Heart left ventricle (tissue), 16 donors: ENCODE measurements at regions of chr11 and their contacts with region 1.

Region 1: DNA sequence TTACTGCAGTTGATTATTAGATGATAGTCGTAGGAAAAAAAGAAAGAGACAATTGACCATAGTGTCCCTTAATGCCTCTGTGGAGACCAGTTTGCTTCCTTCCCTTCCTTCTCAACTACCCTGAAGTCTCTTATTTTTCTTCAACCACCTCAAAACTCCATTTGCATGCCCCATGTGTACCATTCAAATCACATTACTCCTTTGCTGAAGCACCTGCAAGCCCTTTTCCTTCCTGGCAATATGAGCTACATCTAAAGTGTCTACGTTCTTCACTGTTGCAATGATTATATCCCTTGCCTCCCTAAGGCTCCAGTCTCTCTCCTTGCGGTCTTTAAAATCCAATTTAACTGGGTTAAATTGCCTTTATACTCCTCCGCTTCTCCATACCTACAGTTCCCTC is 867.4 kb upstream of the API5 start:
- DNase-seq: no peak
- ATAC-seq: no peak
- H3K4me3 ChIP-seq: no peak overlapping the region
- H3K27ac ChIP-seq: no peak overlapping the region
- H3K4me1 ChIP-seq: no peaks in the 10 kb centered on the region
- H3K27me3 ChIP-seq: no peaks in the 10 kb centered on the region
- CTCF ChIP-seq: no peak
- POLR2A ChIP-seq: no peak

Region 2: GRCh38 chr11:42299780-42300179 is 144.6 kb before region 1 on chr11:
- intact Hi-C with region 1: no loop called
- DNase-seq: no peak
- ATAC-seq: no peak
- H3K4me3 ChIP-seq: no peak overlapping the region
- H3K27ac ChIP-seq: no peak overlapping the region
- H3K4me1 ChIP-seq: no peaks in the 10 kb centered on the region
- H3K27me3 ChIP-seq: no peaks in the 10 kb centered on the region
- CTCF ChIP-seq: no peak
- POLR2A ChIP-seq: no peak

Region 3: DNA sequence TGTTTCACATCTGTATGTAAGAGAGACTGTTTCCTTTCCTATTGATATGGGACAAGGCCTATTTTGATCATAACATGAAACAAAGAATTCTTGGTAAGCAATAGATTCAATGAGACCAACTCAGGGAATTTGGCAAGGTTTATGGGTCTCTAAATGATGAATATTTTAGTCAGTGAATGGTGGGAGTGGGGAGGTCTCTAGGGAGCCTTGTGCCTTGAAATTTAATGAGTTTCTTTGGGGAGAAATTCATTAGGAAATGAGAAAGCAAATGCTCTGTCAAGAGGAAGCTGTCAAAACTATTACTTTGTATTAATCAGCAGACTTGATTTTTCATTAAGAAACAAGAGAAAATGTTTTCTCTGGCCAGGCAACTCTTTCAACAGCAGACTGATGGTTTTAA is 54.3 kb before region 1 on chr11:
- intact Hi-C with region 1: loop called in 1 of 10 experiments (anchors 10 kb)
- DNase-seq: no peak
- ATAC-seq: no peak
- H3K4me3 ChIP-seq: no peak overlapping the region
- H3K27ac ChIP-seq: no peak overlapping the region
- H3K4me1 ChIP-seq: no peaks in the 10 kb centered on the region
- H3K27me3 ChIP-seq: no peaks in the 10 kb centered on the region
- CTCF ChIP-seq: no peak
- POLR2A ChIP-seq: no peak